Activated naive CD8-positive, alpha-beta T cell treated with anti-CD3 and anti-CD28 coated beads, Interleukin-2, amount 10 ng/mL, durations not matched to agents 7 days and 5 days (primary cell): ENCODE measurements at regions of chr14 and their contacts with region 1.

Region 1: DNA sequence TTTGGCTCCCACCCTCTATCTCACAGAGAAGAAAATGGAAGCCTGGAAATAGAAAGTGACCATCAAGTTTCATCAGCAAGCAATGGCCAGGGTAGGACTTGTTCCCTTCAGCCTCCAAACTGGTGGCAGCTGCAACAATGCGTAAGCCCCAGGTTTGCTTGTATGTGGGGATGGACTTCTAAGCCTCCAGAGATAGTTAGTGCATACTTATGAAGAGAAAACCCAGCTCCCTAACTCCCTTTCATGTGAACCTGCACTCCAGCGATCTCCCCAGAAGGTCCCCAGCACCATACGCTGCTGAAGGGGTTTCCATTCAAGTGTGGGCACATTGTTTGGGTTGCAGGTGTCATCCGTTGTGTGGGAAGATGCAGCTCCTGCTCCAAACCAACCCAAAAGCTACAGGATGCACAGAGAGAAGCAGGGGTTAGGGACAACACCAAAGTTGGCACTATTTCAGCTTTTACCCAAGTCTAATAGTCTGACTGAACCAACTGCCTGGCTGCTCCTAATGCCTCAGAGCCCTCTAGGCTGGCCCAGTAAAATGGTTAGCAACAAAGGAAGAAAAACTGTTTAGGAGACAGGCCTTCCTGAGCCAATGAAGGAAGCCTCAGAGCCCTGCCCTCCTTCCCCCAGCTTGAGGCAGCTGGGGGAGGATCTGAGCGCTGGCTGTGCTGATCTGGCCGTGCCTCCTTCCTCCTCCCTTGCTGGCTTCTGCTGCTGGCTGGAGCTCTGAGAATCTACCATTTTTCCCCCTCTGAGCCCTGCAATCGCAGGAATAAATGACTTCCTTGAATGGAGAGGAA is 12.3 kb downstream of the ZFP36L1 start:
- DNase-seq: peak; percentile 62
- ATAC-seq: peak; percentile 65
- H3K4me3 Mint-ChIP-seq: peak overlapping the region; percentile 86
- H3K27ac Mint-ChIP-seq: peak overlapping the region; percentile 96
- H3K4me1 Mint-ChIP-seq: peaks cover 58% of the 10 kb centered on the region
- H3K27me3 Mint-ChIP-seq: no peaks in the 10 kb centered on the region

Region 2: GRCh38 chr14:68685419-68686204 is 94.9 kb before region 1 on chr14:
- POLR2A ChIA-PET with region 1: interaction called, 24 read pairs
- DNase-seq: peak; percentile 71
- ATAC-seq: peak; percentile 92
- H3K4me3 Mint-ChIP-seq: peak overlapping the region; percentile 41
- H3K27ac Mint-ChIP-seq: peak overlapping the region; percentile 85
- H3K4me1 Mint-ChIP-seq: peaks cover 37% of the 10 kb centered on the region
- H3K27me3 Mint-ChIP-seq: no peaks in the 10 kb centered on the region

Region 3: DNA sequence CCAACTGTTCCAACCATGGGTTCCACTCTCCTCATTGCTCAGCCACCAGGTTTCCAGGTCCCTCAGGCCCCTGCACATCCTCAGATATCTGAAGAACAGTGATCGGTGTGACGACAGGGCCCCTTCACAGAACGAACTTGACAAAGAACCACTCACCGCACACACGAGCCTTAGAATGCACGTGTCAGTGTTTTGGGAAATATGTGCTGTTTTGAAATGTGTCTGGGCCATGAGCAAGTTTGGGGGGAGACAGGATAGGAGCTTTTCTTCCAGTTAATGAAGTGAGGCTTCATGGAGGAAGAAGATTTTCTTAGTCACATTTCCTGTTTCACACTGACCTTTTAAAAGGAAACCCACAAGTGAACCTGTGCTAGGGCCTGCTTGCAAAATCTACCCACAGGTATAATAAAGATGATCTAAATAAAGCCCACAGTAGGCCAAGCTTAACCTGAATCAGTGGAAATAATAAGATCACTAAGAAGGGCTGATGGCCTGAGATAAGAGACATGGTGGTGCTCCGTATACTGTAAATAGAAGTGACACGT is 46.3 kb before region 1 on chr14:
- POLR2A ChIA-PET with region 1: interaction called, 26 read pairs
- DNase-seq: peak; percentile 47
- ATAC-seq: peak; percentile 74
- H3K4me3 Mint-ChIP-seq: peak overlapping the region; percentile 27
- H3K27ac Mint-ChIP-seq: peak overlapping the region; percentile 73
- H3K4me1 Mint-ChIP-seq: peaks cover 32% of the 10 kb centered on the region
- H3K27me3 Mint-ChIP-seq: peaks cover 2% of the 10 kb centered on the region

Region 4: GRCh38 chr14:68757618-68758081 is 22.9 kb before region 1 on chr14:
- POLR2A ChIA-PET with region 1: interaction called, 17 read pairs
- DNase-seq: no peak
- ATAC-seq: peak; percentile 47
- H3K4me3 Mint-ChIP-seq: no peak overlapping the region
- H3K27ac Mint-ChIP-seq: peak overlapping the region; percentile 34
- H3K4me1 Mint-ChIP-seq: peaks cover 16% of the 10 kb centered on the region
- H3K27me3 Mint-ChIP-seq: peaks cover 4% of the 10 kb centered on the region

Region 5: DNA sequence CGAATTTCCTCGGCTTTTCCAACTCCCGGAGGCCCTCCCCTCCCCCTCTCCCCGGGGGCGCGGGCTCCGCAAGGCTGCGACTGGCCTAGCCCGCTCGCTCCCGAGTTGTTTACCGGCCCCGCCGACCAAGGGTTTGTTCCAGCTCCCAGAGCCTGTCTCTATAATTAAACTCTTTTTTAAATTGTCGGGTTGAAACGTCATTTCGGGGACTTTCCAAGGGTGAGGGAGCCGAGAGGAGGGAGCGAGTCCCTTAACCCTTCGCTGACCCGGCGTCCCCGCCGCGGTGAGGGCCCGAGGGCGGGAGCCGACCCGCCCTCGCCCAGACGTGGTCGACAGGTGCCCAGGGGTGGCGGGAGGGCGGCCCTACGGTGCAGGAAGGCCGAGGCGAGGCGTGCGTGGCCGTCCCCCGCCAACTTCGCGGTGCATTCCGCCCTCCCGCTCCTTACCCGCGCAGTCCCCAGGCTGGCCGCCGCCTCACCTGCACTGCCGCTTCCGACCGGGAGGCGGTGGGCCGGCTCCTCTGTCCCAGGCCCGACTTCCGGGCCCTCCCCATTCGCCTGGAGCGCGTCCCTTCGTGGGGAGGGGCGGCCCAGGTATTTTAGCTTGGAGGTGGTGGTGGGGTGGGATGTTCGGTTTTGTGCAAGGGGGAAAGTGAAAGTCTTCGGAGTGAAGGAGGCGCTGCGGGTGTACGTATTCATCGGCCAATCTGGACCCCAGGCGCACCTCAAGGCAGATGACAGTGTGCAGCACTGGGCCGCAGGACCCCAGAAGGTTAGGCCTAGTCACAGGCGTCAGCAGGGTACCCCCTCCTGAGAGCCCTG is 15.2 kb after region 1 on chr14:
- POLR2A ChIA-PET with region 1: interaction called, 194 read pairs
- DNase-seq: peak; percentile 90
- ATAC-seq: peak; percentile 57
- H3K4me3 Mint-ChIP-seq: peak overlapping the region; percentile 89
- H3K27ac Mint-ChIP-seq: peak overlapping the region; percentile 98
- H3K4me1 Mint-ChIP-seq: peaks cover 35% of the 10 kb centered on the region
- H3K27me3 Mint-ChIP-seq: no peaks in the 10 kb centered on the region

Region 6: DNA sequence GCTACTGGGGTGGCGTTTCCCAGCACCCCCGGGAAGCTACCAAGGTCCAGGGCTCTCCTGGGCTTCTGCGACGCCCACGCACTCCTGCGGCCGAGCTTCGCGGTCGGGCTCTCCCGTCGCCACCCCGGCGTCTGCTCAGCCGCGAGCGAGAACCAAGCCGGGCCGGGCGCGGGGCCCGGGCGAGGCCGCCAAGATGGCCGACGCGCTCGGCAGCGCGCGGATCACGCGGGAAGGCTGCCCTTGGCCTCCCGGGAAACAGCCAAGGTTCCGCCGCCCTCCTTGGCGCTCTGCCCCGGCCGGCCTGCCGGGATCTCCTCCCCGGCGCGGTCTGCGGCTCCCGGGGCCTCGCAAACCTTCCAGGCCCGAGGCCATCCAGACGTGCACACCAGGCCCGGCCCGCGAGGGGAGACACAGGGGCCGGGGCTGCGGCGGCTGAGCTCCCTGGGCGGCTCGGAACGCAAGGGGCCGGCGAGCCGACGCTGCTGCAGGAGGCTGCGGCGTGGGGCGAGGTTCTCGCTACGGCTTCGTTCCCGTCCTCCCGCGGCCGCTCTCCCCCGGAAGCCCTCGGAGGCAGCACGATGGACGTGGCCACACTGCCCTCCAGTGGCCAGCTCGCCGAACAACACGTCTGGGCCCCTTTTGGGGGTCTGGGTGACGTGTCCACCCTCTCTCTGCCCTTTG is 35.8 kb after region 1 on chr14:
- POLR2A ChIA-PET with region 1: interaction called, 59 read pairs
- DNase-seq: peak; percentile 93
- ATAC-seq: peak; percentile 83
- H3K4me3 Mint-ChIP-seq: peak overlapping the region; percentile 84
- H3K27ac Mint-ChIP-seq: peak overlapping the region; percentile 89
- H3K4me1 Mint-ChIP-seq: peaks cover 47% of the 10 kb centered on the region
- H3K27me3 Mint-ChIP-seq: no peaks in the 10 kb centered on the region